Calu3 (cell line): ENCODE measurements at regions of chr4 and their contacts with region 1.

Region 1: GRCh38 chr4:52911684-52912294 is 49.7 kb downstream of the RASL11B start:
- DNase-seq: peak; percentile 84
- H3K4me3 Mint-ChIP-seq: no peak overlapping the region
- H3K27ac Mint-ChIP-seq: no peak overlapping the region
- H3K4me1 Mint-ChIP-seq: peaks cover 19% of the 10 kb centered on the region
- H3K27me3 Mint-ChIP-seq: no peaks in the 10 kb centered on the region
- CTCF ChIP-seq: peak; percentile 70

Region 2: DNA sequence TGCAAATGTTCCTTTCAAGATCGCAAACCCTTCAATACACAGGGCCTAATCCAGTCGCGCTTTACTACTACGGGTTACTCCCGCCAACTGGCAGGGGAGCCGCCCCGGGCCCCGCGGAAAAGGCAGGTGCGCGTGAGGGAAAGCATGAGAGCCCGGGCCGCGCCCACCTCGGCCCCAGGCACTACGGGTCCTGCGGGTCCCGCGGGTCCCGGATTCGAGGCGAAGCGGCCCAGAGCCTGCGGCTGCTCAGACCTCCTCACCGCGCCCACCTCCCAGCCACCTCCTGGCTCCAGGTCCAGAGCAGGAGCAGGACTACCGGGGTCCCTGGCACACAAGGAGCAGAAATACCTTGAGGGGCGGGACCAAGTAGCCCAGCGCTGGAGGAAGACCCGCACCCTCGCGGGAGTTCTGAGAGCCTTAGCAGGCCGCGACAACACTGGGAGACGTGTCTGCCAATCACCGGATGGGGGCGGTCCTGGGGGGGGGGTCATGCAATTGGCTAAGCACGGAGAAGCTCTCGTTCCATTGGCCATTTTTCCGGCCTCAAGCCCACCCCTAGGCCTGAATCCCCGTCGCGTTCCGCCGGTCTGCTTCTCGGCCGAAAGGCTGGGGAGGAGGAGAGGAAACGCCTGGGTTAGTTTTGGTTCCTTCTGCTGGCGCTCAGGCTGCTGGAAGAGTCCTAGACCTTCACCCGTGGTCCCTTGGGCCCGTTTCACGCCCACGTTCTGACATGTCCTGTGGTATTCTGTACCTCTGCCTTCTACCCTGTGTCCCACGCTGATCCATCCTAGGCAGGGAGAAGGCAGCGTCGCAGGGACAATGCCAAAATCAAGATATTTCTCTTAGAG is 189.6 kb before region 1 on chr4:
- CTCF ChIA-PET with region 1: no interaction called
- intact Hi-C with region 1: loop called (anchors 5 kb)
- DNase-seq: peak; percentile 81
- H3K4me3 Mint-ChIP-seq: peak overlapping the region; percentile 52
- H3K27ac Mint-ChIP-seq: peak overlapping the region; percentile 38
- H3K4me1 Mint-ChIP-seq: peaks cover 8% of the 10 kb centered on the region
- H3K27me3 Mint-ChIP-seq: no peaks in the 10 kb centered on the region
- CTCF ChIP-seq: no peak

Region 3: DNA sequence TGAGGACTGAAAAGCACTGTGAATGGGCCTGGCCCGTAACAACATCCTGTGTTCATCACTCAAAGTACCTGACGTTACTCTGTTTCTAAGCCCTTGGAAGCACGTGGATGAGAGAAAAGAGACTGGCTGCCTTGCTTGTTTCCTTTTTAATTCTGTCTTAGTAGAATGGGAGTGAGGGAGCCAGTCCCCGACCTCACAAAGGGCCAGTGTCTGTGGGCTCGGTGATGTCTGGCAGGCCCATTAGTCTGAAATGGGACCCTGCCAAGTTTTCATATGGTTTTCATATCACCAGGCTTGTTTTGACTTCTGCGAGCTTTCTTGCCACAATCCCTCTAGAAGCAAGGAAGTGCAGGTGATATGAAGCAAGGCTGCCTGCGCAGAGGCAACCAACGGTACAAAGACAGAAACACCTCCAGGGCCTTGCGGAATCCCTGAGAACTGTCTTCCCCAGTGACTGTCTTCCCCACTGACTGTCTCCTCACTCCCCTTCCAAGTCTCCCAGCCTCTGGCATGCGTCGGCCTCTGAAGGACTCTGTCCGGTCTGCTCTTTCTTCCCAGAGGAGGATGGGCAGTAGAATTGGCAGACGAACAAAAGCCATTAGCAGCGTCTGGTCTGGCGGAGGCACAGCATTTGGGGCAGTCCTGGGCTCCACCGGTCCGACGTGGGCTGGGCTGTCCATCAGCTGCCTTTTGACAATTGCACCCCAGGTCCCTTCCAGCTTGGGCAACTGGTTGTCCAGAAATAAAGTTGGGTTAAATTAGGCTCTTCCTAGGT is 69.9 kb before region 1 on chr4:
- CTCF ChIA-PET with region 1: no interaction called
- intact Hi-C with region 1: loop called (anchors 10 kb)
- DNase-seq: no peak
- H3K4me3 Mint-ChIP-seq: no peak overlapping the region
- H3K27ac Mint-ChIP-seq: no peak overlapping the region
- H3K4me1 Mint-ChIP-seq: peaks cover 11% of the 10 kb centered on the region
- H3K27me3 Mint-ChIP-seq: no peaks in the 10 kb centered on the region
- CTCF ChIP-seq: no peak